ENCODE measurements at regions of chr22 and their contacts with region 1.

Region 1: DNA sequence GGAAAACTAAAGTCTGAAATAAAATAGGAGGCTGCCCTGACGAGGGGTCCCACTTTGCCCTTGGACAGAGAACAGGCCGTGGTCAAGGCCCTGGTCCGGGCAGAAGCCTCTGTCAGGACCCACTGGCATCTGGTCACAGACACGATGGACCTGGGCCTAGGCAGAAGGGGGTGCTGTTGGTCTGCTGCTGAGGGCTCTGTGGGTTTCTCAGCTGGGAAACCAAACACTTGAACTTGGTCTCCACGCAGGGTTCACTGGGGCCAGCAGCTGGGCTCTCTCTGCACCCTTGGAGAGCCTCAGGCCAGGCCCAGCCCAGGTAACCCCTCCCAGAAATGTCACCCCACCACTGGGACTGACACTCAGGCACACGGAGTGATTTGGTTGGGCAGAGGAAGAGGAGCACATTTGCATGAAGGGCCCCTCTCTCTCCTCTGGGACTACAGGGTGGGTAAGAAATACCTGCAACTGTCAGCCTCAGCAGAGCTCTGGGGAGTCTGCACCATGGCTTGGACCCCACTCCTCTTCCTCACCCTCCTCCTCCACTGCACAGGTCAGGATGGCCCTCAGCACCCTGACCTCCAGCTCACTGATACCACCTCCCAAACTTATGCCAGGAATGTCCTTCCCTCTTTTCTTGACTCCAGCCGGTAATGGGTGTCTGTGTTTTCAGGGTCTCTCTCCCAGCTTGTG is 48.1 kb upstream of the TOP3B start:
- DNase-seq: peak; percentile 84
- ATAC-seq: peak; percentile 82
- H3K4me3 ChIP-seq: peak overlapping the region; percentile 66
- H3K27ac ChIP-seq: peak overlapping the region; percentile 80
- H3K4me1 ChIP-seq: peaks cover 38% of the 10 kb centered on the region
- H3K27me3 ChIP-seq: no peaks in the 10 kb centered on the region
- CTCF ChIP-seq: peak; percentile 85 to 93 (median 88)
- EP300 ChIP-seq: no peak; a peak in 1 of 4 replicates
- POLR2A ChIP-seq: peak; percentile 92
- RAD21 ChIP-seq: peak; percentile 84

Region 2: DNA sequence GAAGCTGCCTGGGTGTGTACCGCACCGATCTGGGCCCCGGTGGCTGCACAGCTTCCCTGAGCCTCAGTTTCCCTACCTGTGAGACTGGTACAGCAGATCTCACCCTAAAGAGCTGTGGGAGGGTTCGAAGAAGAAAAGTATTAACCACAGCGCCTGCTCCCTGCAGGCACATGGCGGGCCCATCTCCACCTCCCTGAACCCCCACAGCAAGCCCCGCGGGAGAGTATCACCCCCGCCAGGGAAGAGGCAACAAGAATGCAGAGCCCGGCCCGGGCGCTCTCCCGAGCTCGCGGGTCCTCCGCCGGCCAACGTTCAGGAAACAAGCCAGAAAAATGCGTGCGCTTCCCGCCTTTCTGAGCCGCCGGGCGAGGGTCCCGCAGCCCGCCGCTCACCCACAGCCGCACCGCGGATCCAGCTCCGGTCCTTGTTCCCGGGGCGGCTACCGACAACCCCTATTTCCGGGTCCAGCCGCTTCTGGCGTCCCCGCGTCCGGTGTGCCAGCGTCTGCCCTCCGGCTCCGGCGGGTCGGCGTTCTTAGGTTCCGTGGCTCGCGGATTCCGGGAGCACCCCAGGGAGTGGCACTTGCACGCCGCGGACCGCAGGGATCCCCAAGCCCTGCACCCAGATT is 48.2 kb before region 1 on chr22 and contains the start of gene TOP3B:
- CTCF ChIA-PET with region 1: interaction called, 6 read pairs
- POLR2A ChIA-PET with region 1: interaction called, 3 read pairs
- RAD21 ChIA-PET with region 1: interaction called, 6 read pairs
- SMC1A ChIA-PET with region 1: interaction called, 3 read pairs
- in situ Hi-C with region 1: no loop called
- intact Hi-C with region 1: loop called (anchors 5 kb)
- DNase-seq: peak; percentile 17
- ATAC-seq: peak; percentile 93
- H3K4me3 ChIP-seq: peak within 1 kb of the TSS; percentile 79
- H3K27ac ChIP-seq: peak within 1 kb of the TSS; percentile 69
- H3K4me1 ChIP-seq: peaks cover 4% of the 10 kb centered on the region
- H3K27me3 ChIP-seq: no peaks in the 10 kb centered on the region
- CTCF ChIP-seq: no peak
- EP300 ChIP-seq: no peak
- POLR2A ChIP-seq: peak; percentile 92
- RAD21 ChIP-seq: peak; percentile 30; the same call in 1 of the 2 replicates
- polyA plus RNA-seq, gene TOP3B: 0.60 to 1.6 TPM

Region 3: GRCh38 chr22:22067192-22067591 is 36.6 kb after region 1 on chr22:
- CTCF ChIA-PET with region 1: interaction called, 177 read pairs
- POLR2A ChIA-PET with region 1: no interaction called
- RAD21 ChIA-PET with region 1: interaction called, 76 read pairs
- SMC1A ChIA-PET with region 1: interaction called, 76 read pairs
- in situ Hi-C with region 1: no loop called
- intact Hi-C with region 1: no loop called
- DNase-seq: no peak
- ATAC-seq: no peak
- H3K4me3 ChIP-seq: no peak overlapping the region
- H3K27ac ChIP-seq: no peak overlapping the region
- H3K4me1 ChIP-seq: peaks cover 12% of the 10 kb centered on the region
- H3K27me3 ChIP-seq: no peaks in the 10 kb centered on the region
- CTCF ChIP-seq: no peak
- EP300 ChIP-seq: no peak
- POLR2A ChIP-seq: no peak
- RAD21 ChIP-seq: no peak

Region 4: DNA sequence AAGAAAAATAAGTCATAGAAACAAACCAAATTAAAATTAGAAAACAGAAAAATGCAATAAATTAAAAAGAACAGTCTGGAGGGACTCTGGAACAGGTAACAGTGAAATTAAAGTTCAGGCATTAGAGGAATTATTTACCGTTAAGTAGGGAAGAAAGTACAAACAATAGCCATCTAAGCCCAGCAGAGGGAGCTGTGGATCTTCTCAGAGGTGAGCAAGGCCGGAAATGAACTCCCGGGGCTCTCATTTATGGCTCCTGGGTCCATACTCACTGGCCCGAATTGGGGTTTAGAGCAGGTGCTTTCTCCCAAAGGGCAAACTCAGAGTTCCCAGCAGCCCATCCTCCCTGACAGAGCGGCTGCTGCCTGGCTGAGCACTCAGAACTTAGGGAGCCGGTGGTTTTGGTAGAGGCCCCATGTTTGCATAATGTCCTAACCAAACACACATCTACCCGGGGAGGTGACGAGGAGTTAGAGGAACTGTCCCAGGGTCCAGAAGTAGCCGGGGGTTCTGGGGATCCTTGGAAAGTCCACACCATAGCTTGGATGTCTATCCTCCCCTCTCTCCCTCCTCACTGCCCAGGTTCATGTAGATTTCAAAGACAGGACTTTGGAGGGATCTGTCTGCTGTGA is 126.2 kb after region 1 on chr22:
- CTCF ChIA-PET with region 1: interaction called, 30 read pairs
- POLR2A ChIA-PET with region 1: interaction called, 6 read pairs
- RAD21 ChIA-PET with region 1: interaction called, 22 read pairs
- SMC1A ChIA-PET with region 1: interaction called, 16 read pairs
- in situ Hi-C with region 1: loop called (anchors 10 kb)
- intact Hi-C with region 1: loop called (anchors 1 kb)
- DNase-seq: peak; percentile 59
- ATAC-seq: peak; percentile 94
- H3K4me3 ChIP-seq: no peak overlapping the region
- H3K27ac ChIP-seq: peak overlapping the region; percentile 86
- H3K4me1 ChIP-seq: peaks cover 10% of the 10 kb centered on the region
- H3K27me3 ChIP-seq: no peaks in the 10 kb centered on the region
- CTCF ChIP-seq: peak; percentile 67 to 79 (median 75)
- EP300 ChIP-seq: 0 out of 4 replicates have a peak, but pooled peaks of 1 of the 2 experiments have one; percentile 23
- POLR2A ChIP-seq: peak; percentile 41
- RAD21 ChIP-seq: peak; percentile 80

Region 5: GRCh38 chr22:22195265-22196017 is 164.8 kb after region 1 on chr22:
- CTCF ChIA-PET with region 1: interaction called, 29 read pairs
- POLR2A ChIA-PET with region 1: interaction called, 7 read pairs
- RAD21 ChIA-PET with region 1: interaction called, 20 read pairs
- SMC1A ChIA-PET with region 1: interaction called, 19 read pairs
- in situ Hi-C with region 1: no loop called
- intact Hi-C with region 1: loop called (anchors 1 kb)
- DNase-seq: peak; percentile 91
- ATAC-seq: peak; percentile 94
- H3K4me3 ChIP-seq: peak overlapping the region; percentile 62; the same call in 1 of the 2 replicates
- H3K27ac ChIP-seq: peak overlapping the region; percentile 63
- H3K4me1 ChIP-seq: peaks cover 18% of the 10 kb centered on the region
- H3K27me3 ChIP-seq: no peaks in the 10 kb centered on the region
- CTCF ChIP-seq: peak; percentile 94 to 95 (median 94); a peak in 5 of 6 replicates
- EP300 ChIP-seq: peak in 1 of 2 experiments; percentile 64; a peak in 3 of 4 replicates
- POLR2A ChIP-seq: peak; percentile 56; the same call in 1 of the 2 replicates
- RAD21 ChIP-seq: peak; percentile 55

Region 6: GRCh38 chr22:22226448-22227187 is 196.0 kb after region 1 on chr22:
- CTCF ChIA-PET with region 1: no interaction called
- POLR2A ChIA-PET with region 1: no interaction called
- RAD21 ChIA-PET with region 1: no interaction called
- SMC1A ChIA-PET with region 1: no interaction called
- in situ Hi-C with region 1: no loop called
- intact Hi-C with region 1: no loop called
- DNase-seq: no peak
- ATAC-seq: no peak
- H3K4me3 ChIP-seq: no peak overlapping the region
- H3K27ac ChIP-seq: no peak overlapping the region
- H3K4me1 ChIP-seq: no peaks in the 10 kb centered on the region
- H3K27me3 ChIP-seq: no peaks in the 10 kb centered on the region
- CTCF ChIP-seq: no peak
- EP300 ChIP-seq: no peak
- POLR2A ChIP-seq: no peak
- RAD21 ChIP-seq: no peak

Region 7: DNA sequence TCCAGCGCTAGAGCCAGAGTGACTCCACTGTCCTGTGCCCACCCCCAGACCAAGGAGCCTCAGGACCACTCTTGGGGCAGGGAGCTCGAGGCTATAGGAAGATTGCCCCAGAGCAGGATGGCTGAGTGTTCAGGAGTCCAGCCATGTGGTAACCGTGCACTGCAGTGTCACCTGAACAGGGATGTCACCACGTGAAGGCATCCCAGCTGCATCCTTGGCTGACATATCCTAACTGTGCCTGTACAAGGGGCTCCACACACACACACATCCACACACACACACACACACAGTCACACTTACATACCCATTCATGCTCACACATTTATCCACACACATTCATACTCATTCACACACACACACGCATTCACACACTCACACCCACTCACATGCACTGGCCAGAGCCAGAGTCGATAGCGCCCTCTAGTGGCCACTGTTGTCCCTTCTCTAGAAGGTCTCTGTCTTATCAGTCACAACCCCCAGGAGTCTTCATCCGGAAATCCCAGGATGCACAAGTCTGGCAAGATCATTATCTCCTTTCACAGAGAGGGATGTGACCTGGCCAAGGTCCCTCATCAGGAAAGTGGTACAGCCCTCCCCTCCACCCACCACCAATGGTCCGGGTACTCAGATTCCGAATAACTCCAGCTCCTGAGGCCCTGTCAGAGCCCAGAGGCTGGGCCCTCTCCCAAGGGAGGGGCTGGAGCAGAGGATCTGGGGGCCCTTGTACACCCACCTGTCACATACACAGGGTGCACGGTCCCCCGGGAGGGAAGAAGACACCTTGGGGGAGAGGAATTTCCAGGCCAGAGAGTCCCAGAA is 912.1 kb after region 1 on chr22:
- CTCF ChIA-PET with region 1: interaction called, 4 read pairs
- POLR2A ChIA-PET with region 1: no interaction called
- RAD21 ChIA-PET with region 1: interaction called, 13 read pairs
- SMC1A ChIA-PET with region 1: interaction called, 5 read pairs
- in situ Hi-C with region 1: no loop called
- intact Hi-C with region 1: no loop called
- DNase-seq: peak; percentile 78
- ATAC-seq: peak; percentile 89
- H3K4me3 ChIP-seq: no peak overlapping the region
- H3K27ac ChIP-seq: peak overlapping the region; percentile 92
- H3K4me1 ChIP-seq: peaks cover 90% of the 10 kb centered on the region
- H3K27me3 ChIP-seq: no peaks in the 10 kb centered on the region
- CTCF ChIP-seq: peak; percentile 84 to 96 (median 87)
- EP300 ChIP-seq: 0 out of 4 replicates have a peak, but pooled peaks of 1 of the 2 experiments have one; percentile 61
- POLR2A ChIP-seq: no peak; the same call in 1 of the 2 replicates
- RAD21 ChIP-seq: peak; percentile 94